Posterior vena cava (tissue), 2 donors: ENCODE measurements at regions of chr11 and their contacts with region 1.

Region 1: GRCh38 chr11:9748361-9748970 is 84.6 kb downstream of the SWAP70 start:
- DNase-seq: no peak

Region 2: GRCh38 chr11:8328848-8329330 is 1419.6 kb before region 1 on chr11:
- intact Hi-C with region 1: no loop called
- DNase-seq: peak; percentile 92

Region 3: DNA sequence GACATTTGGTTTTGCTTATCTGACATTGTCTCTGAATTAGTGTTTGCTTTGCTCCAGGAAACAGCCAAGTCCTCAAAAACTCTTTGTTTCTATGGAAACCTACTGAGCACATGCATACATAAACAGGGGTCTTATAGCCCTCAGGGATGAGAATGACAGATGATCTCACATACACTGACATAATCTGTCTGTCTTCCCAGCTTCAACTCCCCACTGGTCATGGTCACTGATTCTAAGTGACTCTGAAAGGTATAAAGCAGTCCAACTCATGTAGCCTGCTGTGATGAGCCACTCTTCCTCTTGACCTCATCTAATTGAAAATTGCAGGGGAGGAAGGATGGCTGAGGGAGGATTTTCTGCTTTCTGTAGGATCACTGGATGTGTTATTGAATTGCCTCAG is 275.1 kb before region 1 on chr11:
- intact Hi-C with region 1: loop called in 1 of 2 experiments (anchors 5 kb)
- DNase-seq: no peak

Region 4: DNA sequence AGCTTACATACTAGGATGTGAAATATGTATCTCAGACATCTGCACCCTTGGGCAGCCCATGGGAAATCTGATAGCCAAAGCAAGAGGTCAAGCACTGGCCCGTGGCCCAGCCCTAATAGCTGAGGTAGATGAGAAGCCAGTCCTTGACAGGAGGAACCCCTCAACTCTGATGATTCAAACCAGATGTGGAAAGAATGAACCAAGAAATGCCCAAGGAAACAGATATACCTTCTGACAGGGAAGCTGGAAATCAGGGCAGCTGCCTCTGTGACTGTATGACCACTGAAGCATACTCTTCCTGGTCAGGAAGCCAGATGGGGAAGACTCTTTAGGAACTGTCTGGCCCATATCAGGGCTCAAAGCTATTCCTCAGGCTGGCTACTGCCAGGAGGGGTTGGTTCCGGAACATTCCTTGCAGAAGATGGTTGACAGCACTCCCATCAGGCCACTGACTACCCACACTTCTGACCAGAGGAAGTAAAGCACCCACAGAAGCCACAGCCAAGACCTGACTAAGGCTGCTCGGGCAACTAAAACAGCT is 39.6 kb after region 1 on chr11:
- intact Hi-C with region 1: no loop called
- DNase-seq: no peak